ENCODE measurements at regions of chr1 and their contacts with region 1.

Region 1: DNA sequence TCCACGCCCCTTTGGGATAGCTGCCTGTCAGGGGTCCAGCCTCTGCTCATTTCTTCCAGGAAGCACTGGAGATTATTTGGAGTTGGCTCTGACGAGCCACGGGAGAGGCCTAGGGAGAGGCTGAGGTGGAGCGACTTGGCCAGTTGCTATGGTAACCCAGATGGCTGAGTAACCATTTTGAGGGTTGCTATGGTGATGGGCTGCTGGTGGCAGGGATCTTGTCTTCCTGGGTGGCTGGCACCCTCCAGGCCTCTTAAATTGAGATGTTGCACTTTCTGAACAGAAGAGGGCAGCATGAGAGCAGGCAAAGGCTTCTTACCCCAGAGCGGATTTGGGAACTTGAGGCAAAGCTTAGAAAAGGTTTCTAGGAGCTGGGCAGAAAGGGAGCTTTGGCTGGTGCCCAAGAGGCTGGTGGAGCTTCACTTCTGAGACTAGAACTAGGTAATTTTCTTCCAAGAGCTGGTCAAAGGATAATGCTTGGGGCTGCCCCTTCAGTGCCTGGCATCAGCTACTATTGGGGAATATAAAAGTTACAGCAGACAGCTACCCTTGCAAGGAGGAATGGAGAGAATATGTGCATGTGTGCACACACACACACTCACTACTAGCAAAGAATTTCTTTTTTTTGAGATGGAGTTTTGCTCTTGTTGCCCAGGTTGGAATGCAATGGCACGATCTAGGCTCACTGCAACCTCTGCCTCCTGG is 72.5 kb downstream of the NDUFS5 start:
- DNase-seq: peak; percentile 74
- ATAC-seq: peak; percentile 84
- H3K4me3 Mint-ChIP-seq: no peak overlapping the region
- H3K27ac Mint-ChIP-seq: no peak overlapping the region
- H3K4me1 Mint-ChIP-seq: peaks cover 22% of the 10 kb centered on the region
- H3K27me3 Mint-ChIP-seq: no peaks in the 10 kb centered on the region
- CTCF ChIP-seq: peak; percentile 76

Region 2: DNA sequence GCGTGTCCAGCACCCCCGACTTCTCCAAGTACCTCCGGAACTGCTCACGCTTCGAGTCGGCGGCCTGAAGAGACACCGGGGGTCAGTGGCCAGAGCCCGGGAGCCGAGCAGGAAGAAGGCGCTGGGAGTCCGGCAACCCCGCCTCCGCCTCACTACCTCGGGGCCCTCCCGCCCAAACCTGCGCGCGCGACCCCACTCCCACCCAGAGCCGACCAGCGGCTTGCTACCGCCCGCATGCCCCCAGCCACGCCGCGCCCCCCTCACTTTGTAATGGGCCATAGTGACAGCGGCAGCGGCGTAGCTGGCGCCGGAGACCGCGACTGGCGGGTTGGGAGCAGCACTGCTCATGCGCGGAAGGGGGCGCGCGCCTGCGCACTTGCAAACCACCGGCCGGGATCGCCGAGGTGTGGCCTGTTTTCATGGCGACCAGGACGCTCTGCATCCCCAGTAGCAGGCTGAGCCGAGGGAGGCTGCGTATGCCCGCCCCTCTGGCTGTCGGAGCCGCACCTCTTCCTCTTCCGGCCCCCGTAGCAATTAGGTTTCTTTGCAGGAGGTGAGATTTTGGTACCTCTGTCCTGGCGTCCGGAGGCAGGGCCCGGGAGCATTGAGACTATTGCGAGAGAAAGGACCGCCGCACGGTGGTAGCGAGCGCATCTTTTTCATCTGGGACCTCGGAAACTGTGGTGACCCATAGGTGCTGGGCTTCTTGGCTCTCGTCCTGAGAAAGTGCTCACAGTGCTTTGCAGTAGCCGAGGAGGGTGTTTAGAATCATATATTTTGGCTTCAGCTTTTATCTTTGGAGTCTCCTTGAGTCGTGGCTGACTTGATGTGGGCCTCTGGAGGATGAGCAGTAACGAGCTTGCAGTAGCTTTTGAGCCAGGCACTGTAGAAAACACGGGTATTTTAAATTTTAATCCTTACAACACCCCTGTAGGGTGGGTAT is 225.4 kb before region 1 on chr1 and contains the start of gene MYCBP:
- CTCF ChIA-PET with region 1: interaction called, 3 read pairs
- POLR2A ChIA-PET with region 1: no interaction called
- intact Hi-C with region 1: loop called (anchors 10 kb)
- DNase-seq: peak; percentile 97
- ATAC-seq: peak; percentile 99
- H3K4me3 Mint-ChIP-seq: peak within 1 kb of the TSS; percentile 95
- H3K27ac Mint-ChIP-seq: peak within 1 kb of the TSS; percentile 85
- H3K4me1 Mint-ChIP-seq: peaks cover 21% of the 10 kb centered on the region
- H3K27me3 Mint-ChIP-seq: no peaks in the 10 kb centered on the region
- CTCF ChIP-seq: no peak
- total RNA-seq, gene MYCBP: 45.6 to 46.4 TPM

Region 3: DNA sequence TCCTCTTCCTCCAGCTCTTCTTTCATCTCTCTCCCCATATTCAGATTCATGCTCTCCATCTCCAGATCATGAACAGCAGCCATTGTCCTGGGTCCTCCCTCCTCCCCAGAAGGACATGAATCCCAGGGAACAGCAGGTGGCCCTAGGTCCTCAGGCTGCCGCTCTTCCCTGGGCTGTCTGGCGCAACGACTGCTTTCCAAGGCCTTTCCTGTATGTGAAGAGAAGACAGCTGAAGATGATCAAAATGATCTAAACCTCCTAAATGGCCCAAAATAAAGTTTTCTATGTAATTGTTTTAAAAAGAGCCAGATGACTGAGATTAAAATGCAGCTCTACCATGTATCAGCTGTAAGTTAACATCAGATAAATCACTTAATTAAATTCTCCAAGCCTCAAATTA is 179.6 kb before region 1 on chr1:
- CTCF ChIA-PET with region 1: no interaction called
- POLR2A ChIA-PET with region 1: no interaction called
- intact Hi-C with region 1: no loop called
- DNase-seq: no peak
- ATAC-seq: no peak
- H3K4me3 Mint-ChIP-seq: no peak overlapping the region
- H3K27ac Mint-ChIP-seq: no peak overlapping the region
- H3K4me1 Mint-ChIP-seq: peaks cover 10% of the 10 kb centered on the region
- H3K27me3 Mint-ChIP-seq: no peaks in the 10 kb centered on the region
- CTCF ChIP-seq: no peak

Region 4: GRCh38 chr1:39183503-39184353 is 85.0 kb after region 1 on chr1:
- CTCF ChIA-PET with region 1: interaction called, 156 read pairs
- POLR2A ChIA-PET with region 1: no interaction called
- intact Hi-C with region 1: no loop called
- DNase-seq: peak; percentile 93
- ATAC-seq: peak; percentile 84
- H3K4me3 Mint-ChIP-seq: peak overlapping the region; percentile 32
- H3K27ac Mint-ChIP-seq: peak overlapping the region; percentile 94
- H3K4me1 Mint-ChIP-seq: peaks cover 46% of the 10 kb centered on the region
- H3K27me3 Mint-ChIP-seq: no peaks in the 10 kb centered on the region
- CTCF ChIP-seq: peak; percentile 61

Region 5: GRCh38 chr1:39258146-39258924 is 159.6 kb after region 1 on chr1:
- CTCF ChIA-PET with region 1: interaction called, 70 read pairs
- POLR2A ChIA-PET with region 1: interaction called, 4 read pairs
- intact Hi-C with region 1: loop called (anchors 5 kb)
- DNase-seq: peak; percentile 73
- ATAC-seq: peak; percentile 74
- H3K4me3 Mint-ChIP-seq: no peak overlapping the region
- H3K27ac Mint-ChIP-seq: peak overlapping the region; percentile 76
- H3K4me1 Mint-ChIP-seq: peaks cover 38% of the 10 kb centered on the region
- H3K27me3 Mint-ChIP-seq: no peaks in the 10 kb centered on the region
- CTCF ChIP-seq: peak; percentile 93

Region 6: GRCh38 chr1:39408641-39409054 is 309.9 kb after region 1 on chr1:
- CTCF ChIA-PET with region 1: interaction called, 32 read pairs
- POLR2A ChIA-PET with region 1: no interaction called
- intact Hi-C with region 1: no loop called
- DNase-seq: peak; percentile 84
- ATAC-seq: peak; percentile 85
- H3K4me3 Mint-ChIP-seq: peak overlapping the region; percentile 80
- H3K27ac Mint-ChIP-seq: no peak overlapping the region
- H3K4me1 Mint-ChIP-seq: peaks cover 67% of the 10 kb centered on the region
- H3K27me3 Mint-ChIP-seq: no peaks in the 10 kb centered on the region
- CTCF ChIP-seq: no peak

Measured in activated CD8-positive, alpha-beta T cell treated with anti-CD3 and anti-CD28 coated beads for 36 hours (primary cell).